ENCODE measurements at regions of chr2 and their contacts with region 1.

Region 1: DNA sequence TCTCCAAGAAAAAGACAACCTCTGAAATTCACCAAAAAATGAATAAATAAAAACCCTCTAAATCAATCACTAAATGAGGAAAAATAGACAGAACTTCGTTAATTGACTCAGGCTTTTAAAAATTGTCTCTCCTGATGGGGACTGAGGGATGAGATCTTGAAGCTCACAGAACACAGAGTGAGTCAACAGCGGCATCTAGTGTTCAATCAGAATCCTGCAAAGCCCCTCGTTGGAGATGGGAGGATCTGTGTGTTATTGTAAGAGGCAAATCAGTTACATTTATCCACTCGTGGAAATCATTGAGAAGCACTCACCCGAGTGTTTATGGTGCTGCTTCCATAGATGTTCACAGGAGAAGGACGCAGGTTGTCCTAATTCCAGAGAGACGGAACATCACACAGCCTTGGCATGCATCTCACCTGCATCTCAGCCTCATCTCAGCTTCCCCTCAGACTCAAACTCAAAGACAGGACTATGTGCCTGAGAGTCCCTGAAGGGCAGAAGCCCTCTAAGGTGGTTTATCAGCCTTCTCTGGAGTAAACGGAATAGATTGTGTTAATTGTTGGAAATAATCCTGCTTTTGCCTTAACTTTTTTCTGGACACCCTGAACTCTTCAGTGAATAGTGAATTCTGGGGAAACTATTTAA is 82.0 kb downstream of the MREG start:
- DNase-seq: peak; percentile 83
- H3K4me3 ChIP-seq: peak overlapping the region; percentile 61
- H3K27ac ChIP-seq: peak overlapping the region; percentile 58
- H3K4me1 ChIP-seq: peaks cover 35% of the 10 kb centered on the region
- H3K27me3 ChIP-seq: no peaks in the 10 kb centered on the region

Region 2: DNA sequence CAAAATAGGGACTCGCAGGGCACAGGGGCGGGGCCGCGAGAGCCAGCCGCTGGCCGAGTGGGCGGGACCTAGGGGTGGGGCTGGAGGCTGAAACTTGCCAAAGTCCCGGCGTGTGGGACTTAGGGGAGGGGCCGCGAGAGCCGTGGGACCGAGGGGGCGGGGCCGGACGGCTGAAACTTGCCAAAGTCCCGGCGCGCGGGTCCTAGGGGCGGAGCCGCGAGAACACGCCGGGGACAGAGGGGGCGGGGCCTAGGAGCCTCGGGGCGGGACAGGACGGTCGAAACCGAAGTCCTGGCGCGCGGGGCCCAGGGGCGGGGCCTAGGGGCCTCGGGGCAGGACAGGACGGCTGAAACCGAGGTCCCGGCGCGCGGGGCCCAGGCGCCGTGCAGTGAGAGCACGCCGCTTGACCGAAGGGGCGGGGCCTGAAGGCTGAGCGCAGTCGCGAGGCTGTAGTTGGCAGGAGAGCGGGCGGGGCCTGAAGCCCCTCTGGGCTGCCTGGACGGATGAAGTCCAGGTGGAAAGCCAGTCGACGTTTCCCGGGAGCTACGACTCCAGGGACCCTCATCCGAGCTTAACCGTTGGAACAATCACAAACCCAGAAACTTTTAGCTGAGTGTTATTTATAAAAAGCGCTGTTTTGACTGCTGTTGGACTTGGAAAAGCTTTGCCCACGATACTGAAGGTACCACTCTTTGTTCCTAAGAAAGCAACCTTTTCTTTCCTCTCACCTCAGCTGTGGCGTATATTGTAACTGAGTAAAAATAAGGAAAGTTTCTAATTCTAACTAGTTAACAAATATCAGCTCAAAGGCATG is 1121.4 kb before region 1 on chr2:
- in situ Hi-C with region 1: loop called (anchors 25 kb)
- DNase-seq: peak; percentile 99
- H3K4me3 ChIP-seq: peak overlapping the region; percentile 92
- H3K27ac ChIP-seq: peak overlapping the region; percentile 51
- H3K4me1 ChIP-seq: peaks cover 12% of the 10 kb centered on the region
- H3K27me3 ChIP-seq: no peaks in the 10 kb centered on the region

Region 3: GRCh38 chr2:214960677-214961076 is 970.7 kb before region 1 on chr2:
- in situ Hi-C with region 1: loop called (anchors 25 kb)
- DNase-seq: peak; percentile 40
- H3K4me3 ChIP-seq: no peak overlapping the region
- H3K27ac ChIP-seq: no peak overlapping the region
- H3K4me1 ChIP-seq: no peaks in the 10 kb centered on the region
- H3K27me3 ChIP-seq: no peaks in the 10 kb centered on the region

Region 4: DNA sequence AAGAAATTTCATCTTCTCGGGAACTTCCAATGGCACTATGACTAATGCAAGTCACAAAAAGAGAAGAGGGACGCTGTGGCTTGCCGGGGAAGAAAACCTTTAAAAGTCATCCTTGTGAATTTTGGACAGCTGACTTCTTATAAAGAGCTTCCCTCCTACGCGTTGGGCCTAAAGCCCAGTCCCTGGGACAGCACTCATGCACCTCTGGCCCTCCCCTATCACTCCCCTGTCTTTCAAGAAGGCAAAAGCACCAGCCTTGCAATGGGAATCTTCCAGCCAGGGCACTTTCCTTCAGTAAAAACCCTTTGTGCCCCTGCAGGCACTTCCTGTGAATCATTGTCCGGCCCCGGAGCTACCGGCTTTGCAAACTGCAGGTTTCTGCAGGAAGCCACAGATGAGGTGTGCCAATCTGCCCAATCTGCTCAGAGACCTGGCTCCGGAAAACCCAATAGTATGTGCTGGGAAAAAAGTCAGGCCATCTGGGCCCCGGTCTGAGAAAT is 74.8 kb after region 1 on chr2:
- in situ Hi-C with region 1: no loop called
- DNase-seq: peak; percentile 76
- H3K4me3 ChIP-seq: no peak overlapping the region
- H3K27ac ChIP-seq: no peak overlapping the region
- H3K4me1 ChIP-seq: peaks cover 12% of the 10 kb centered on the region
- H3K27me3 ChIP-seq: no peaks in the 10 kb centered on the region

Measured in GM23248 (cell line).